ENCODE measurements at regions of chr3 and their contacts with region 1.

Region 1: DNA sequence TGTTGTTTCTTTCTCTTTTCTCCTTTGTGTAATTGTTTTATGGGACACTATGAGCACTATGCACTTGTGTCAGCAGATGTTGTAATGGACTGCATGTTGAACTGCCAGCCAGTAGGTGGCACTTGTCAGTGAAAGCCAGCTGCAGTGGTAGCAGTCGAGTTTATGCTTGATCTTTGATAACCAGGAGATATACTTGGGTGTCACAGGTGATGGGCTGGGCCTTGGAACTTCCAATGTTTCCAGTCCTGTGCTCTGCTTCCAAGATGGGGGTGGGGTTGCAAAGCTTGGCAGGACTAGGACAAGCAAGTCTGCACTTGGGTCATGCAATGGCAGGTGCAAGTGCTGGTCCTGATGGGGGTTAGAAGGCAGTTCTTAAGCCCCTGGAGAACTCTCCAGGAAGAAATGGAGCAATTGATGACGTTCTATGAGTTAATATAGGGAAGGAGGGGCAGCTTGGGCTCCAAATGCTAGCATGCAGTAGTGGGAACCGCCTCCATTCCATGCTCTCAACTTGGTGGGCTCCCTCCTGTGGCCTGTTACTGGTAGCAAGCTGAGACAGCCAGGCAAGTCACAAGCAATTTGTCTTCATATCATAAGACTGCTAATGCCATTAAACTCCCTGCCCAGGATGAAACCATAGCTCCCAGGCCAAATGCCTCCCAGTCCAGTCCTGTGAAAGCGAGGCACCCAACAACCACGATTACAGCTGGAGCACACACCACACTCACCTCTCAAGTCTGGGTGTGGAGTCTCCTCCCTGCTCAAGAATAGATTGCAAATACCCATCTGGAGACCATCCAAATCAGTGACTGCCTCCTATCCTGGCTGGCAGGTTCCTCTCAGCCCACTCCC is 287.2 kb downstream of the CGGBP1 start:
- DNase-seq: peak in 1 of 10 donors; percentile 71

Region 2: GRCh38 chr3:87742250-87742649 is 29.3 kb before region 1 on chr3:
- intact Hi-C with region 1: loop called (anchors 2 kb)
- DNase-seq: no peak

Region 3: DNA sequence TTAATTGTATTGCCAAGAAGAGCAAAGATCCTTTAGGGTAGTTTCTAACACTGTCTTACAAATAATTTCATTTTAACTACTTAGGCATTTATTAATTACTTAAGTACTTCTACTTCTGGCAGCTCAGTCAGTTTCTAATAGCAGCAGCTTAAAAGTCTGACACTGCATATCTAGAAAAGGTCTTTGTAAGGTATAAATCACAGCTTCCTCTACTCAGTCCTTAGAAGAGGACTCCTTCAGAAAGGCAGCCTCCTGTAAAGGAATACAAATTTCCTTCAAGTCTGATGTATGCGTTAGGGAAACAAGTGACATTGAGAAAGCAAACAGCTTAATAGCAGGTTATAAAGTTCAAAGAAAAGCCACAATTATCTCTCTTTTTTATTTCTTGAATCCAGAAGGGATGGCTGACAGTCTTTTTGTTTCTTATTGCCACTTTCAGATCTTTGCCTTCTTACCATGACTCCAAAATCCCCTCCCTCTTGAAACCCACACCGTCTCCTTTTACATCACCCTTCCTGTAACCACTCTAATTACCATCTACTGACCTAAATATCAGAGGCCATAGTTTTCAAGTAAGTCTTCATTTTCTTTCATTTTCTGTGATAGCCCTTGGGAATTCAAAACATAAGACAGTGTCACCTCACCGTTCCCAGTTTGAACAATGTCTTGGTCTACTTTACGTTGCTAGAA is 177.8 kb after region 1 on chr3:
- intact Hi-C with region 1: no loop called
- DNase-seq: no peak

Measured in posterior cingulate gyrus (tissue), 11 donors.